Head of caudate nucleus (tissue), 42 donors: ENCODE measurements at regions of chr9 and their contacts with region 1.

Region 1: GRCh38 chr9:121213136-121213806 is 11.6 kb upstream of the RAB14 start:
- DNase-seq: peak; percentile 79 to 97 (median 93)

Region 2: GRCh38 chr9:121322037-121322775 is 108.9 kb after region 1 on chr9:
- intact Hi-C with region 1: loop called (anchors 5 kb)
- DNase-seq: no peak

Region 3: DNA sequence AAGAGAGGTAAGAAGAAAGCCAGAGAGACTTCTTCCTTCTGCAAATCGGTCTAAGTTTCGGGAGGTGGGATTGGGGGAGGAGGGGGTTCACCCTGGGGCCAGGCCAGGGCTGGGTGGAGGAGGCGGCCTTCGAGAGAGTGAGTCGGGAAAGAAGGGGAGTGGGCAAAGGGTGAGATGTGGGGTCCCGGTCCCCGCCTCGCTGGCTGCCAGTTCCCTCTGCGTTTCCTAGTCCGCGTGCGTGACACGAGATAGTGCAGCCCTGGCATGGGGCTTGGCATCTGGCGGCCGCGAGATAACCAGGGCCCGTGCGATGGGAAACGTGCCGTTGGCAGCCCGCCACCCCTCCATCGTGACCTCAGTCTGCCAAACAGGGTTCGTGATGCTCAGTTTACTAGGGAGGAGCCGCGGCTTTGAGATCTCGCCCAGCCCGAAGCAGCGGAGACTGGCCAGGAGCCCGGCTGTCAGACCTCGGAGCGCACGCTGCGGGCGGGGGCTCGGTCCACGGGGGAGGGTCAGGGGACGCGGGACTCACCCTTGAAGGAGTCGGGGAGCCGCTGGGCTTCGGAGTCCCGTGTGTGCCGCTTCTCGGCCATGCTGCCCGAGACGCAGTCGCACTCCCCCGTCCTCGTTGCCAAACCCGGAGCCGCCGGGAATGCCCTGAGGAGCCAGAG is 156.5 kb after region 1 on chr9 and contains the start of gene STOM:
- intact Hi-C with region 1: loop called (anchors 10 kb)
- DNase-seq: peak in 14 of 42 donors; percentile 40 to 77 (median 60)

Region 4: DNA sequence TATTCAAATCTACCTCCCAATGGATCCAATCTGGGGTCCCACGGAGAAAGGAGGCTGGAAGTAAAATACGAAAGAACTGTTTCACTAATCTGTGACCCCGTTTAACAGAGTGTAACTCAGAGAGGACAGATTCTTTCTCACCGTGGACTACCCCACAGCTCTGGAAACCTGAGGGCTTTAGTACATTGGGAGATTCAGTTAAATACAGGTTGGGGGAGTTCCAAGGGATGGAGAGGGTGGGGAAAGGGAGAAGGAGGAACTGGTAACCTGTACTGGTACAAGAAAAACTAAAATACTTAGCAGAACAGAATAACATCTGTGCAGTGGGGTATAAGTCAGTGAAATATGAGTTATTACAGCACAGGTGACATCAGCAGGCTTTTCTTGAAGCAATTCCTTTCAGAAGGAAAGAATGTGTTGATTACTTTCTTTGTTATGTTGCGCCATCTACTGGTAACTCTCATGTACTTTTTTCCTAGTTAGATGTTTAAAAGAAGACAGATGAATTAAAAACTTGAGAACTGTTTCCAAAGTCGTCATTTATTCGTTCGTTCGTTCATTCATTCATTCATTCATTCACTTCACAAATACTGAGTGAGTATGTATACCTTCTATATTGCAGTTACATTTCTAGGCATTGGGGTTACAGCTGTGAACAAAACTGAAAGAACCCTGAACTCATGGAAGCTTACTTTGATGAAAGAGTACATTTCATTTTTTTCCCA is 186.8 kb after region 1 on chr9:
- intact Hi-C with region 1: loop called (anchors 5 kb)
- DNase-seq: peak in 5 of 42 donors; percentile 7 to 47 (median 15)